SK-N-SH (cell line): ENCODE measurements at regions of chr5 and their contacts with region 1.

Region 1: GRCh38 chr5:54832858-54833257 is 152.5 kb downstream of the ESM1 start:
- DNase-seq: no peak
- H3K4me3 ChIP-seq: no peak overlapping the region
- H3K27ac ChIP-seq: no peak overlapping the region
- H3K4me1 ChIP-seq: no peaks in the 10 kb centered on the region; a peak in 1 of 4 replicates
- H3K27me3 ChIP-seq: peaks cover 5% of the 10 kb centered on the region; the same call in 1 of the 2 replicates
- CTCF ChIP-seq: no peak
- EP300 ChIP-seq: no peak
- RAD21 ChIP-seq: no peak

Region 2: DNA sequence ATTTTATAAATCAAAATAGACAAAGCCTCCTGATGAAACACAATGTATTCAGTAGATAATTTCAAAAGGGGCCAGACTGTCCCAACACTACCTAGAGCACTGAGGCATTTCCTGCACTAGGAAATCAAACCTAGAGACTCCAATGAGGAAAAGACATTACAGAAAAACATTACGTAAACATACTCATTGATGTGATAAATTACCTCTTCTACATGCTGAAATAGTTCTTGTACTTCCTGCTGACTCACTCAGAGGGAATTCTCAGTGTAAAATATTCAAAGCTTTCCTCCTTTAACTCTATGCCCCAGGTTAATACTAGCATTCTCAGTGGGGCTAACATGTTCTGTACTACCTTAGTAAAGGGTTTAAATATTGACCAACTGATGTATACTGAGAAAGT is 25.4 kb before region 1 on chr5:
- CTCF ChIA-PET with region 1: no interaction called
- POLR2A ChIA-PET with region 1: no interaction called
- DNase-seq: no peak
- H3K4me3 ChIP-seq: no peak overlapping the region
- H3K27ac ChIP-seq: peak overlapping the region in 1 of 2 experiments; percentile 24; a peak in 2 of 4 replicates
- H3K4me1 ChIP-seq: peaks cover 0 to 3% of the 10 kb centered on the region in 2 experiments; a peak in 1 of 4 replicates
- H3K27me3 ChIP-seq: no peaks in the 10 kb centered on the region
- CTCF ChIP-seq: no peak
- EP300 ChIP-seq: no peak
- RAD21 ChIP-seq: no peak

Region 3: GRCh38 chr5:54844905-54845566 is 12.2 kb after region 1 on chr5:
- CTCF ChIA-PET with region 1: interaction called, 14 read pairs
- POLR2A ChIA-PET with region 1: no interaction called
- DNase-seq: peak; percentile 15
- H3K4me3 ChIP-seq: no peak overlapping the region
- H3K27ac ChIP-seq: no peak overlapping the region
- H3K4me1 ChIP-seq: peaks cover 0 to 3% of the 10 kb centered on the region in 2 experiments; a peak in 1 of 4 replicates
- H3K27me3 ChIP-seq: peaks cover 14% of the 10 kb centered on the region; the same call in 1 of the 2 replicates
- CTCF ChIP-seq: peak; percentile 72
- EP300 ChIP-seq: no peak
- RAD21 ChIP-seq: peak; percentile 80

Region 4: DNA sequence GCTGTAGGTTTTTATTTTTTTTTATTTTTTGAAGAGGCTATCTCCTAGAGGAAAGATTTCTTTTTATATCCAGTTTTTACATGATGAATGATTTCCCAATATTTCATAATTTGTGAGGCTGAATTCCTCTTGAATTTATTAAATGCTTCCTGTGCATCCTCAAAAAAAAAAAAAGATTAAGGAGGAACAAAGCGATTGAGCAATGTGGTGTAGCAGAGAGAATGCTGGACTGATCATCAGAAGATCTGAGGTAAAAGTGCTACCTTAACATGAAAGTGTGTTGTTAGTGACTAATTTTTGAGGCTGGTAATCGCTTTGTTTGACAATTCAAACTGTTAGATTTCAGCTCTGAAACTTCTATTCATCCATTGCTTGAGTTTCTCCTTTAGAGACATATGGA is 27.5 kb after region 1 on chr5:
- CTCF ChIA-PET with region 1: no interaction called
- POLR2A ChIA-PET with region 1: no interaction called
- DNase-seq: no peak
- H3K4me3 ChIP-seq: no peak overlapping the region
- H3K27ac ChIP-seq: no peak overlapping the region
- H3K4me1 ChIP-seq: no peaks in the 10 kb centered on the region; a peak in 1 of 4 replicates
- H3K27me3 ChIP-seq: peaks cover 21% of the 10 kb centered on the region; the same call in 1 of the 2 replicates
- CTCF ChIP-seq: no peak
- EP300 ChIP-seq: no peak
- RAD21 ChIP-seq: no peak

Region 5: DNA sequence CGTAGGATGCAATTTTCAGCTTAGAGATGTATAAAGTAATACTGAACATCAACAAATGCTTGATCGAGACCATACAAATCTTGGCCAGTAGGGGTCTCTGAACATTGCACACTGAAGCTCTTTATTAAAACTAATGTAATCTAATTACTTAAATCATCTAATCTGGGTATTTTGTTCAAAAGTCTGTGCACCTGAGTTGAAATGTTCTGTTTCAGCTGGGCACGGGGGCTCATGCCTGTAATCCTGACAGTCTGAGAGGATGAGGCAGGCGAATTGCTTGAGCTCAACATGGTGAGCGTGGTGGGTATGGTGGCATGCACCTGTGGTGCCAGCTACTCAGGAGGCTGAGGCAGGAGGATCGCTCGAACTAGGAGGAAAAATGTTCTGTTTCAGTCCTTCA is 111.5 kb after region 1 on chr5:
- CTCF ChIA-PET with region 1: no interaction called
- POLR2A ChIA-PET with region 1: no interaction called
- DNase-seq: peak; percentile 22
- H3K4me3 ChIP-seq: no peak overlapping the region
- H3K27ac ChIP-seq: no peak overlapping the region
- H3K4me1 ChIP-seq: peaks cover 0 to 3% of the 10 kb centered on the region in 2 experiments; a peak in 1 of 4 replicates
- H3K27me3 ChIP-seq: no peaks in the 10 kb centered on the region; the same call in 1 of the 2 replicates
- CTCF ChIP-seq: peak; percentile 84
- EP300 ChIP-seq: no peak
- RAD21 ChIP-seq: peak; percentile 45; the same call in 1 of the 2 replicates

Region 6: GRCh38 chr5:55104036-55104772 is 271.3 kb after region 1 on chr5:
- CTCF ChIA-PET with region 1: no interaction called
- POLR2A ChIA-PET with region 1: no interaction called
- DNase-seq: no peak
- H3K4me3 ChIP-seq: no peak overlapping the region
- H3K27ac ChIP-seq: no peak overlapping the region
- H3K4me1 ChIP-seq: no peaks in the 10 kb centered on the region; a peak in 1 of 4 replicates
- H3K27me3 ChIP-seq: no peaks in the 10 kb centered on the region; the same call in 1 of the 2 replicates
- CTCF ChIP-seq: no peak
- EP300 ChIP-seq: no peak
- RAD21 ChIP-seq: no peak